Activated CD8-positive, alpha-beta T cell treated with anti-CD3 and anti-CD28 coated beads, Interleukin-2, amount 10 ng/mL, durations not matched to agents 7 days and 5 days (primary cell): ENCODE measurements at regions of chr10 and their contacts with region 1.

Region 1: DNA sequence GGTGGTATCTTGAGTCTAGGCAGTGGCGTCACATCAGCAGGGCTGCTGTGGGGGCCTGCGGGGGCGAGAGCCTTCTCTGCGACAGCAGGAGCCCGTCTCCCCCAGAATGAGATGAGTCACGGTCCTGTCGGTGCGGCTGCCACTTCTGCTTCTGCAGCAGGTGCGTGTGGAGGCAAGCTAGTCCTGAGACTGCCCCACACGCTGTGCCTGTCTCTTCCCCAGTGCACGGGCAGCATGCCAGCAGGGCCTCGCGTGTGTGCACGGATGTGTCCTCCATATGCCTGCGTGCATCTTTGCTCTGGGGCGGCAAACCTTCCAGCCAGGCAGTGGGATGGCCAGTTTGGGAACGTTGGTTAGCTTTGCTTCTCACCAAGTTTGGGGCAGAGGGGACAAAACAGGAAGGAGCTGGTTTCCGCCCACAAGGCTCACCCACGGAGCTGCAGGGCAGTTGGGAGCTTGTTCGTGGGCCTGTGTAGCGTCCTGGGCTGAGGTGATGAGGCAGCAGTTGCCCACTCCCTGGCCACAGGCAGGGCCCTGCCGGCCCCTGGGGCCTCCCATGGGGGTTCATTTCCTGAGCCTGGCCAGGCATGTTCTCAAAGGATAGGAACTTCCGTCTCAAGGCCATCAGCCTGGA is 60.8 kb upstream of the PPIF start:
- DNase-seq: peak; percentile 88
- ATAC-seq: peak; percentile 93
- H3K4me3 Mint-ChIP-seq: peak overlapping the region; percentile 71
- H3K27ac Mint-ChIP-seq: peak overlapping the region; percentile 96
- H3K4me1 Mint-ChIP-seq: peaks cover 68% of the 10 kb centered on the region
- H3K27me3 Mint-ChIP-seq: no peaks in the 10 kb centered on the region

Region 2: GRCh38 chr10:79242620-79243152 is 43.7 kb before region 1 on chr10:
- CTCF ChIA-PET with region 1: interaction called, 4 read pairs
- POLR2A ChIA-PET with region 1: interaction called, 13 read pairs
- DNase-seq: peak; percentile 80
- ATAC-seq: peak; percentile 48
- H3K4me3 Mint-ChIP-seq: peak overlapping the region; percentile 80
- H3K27ac Mint-ChIP-seq: peak overlapping the region; percentile 75
- H3K4me1 Mint-ChIP-seq: peaks cover 60% of the 10 kb centered on the region
- H3K27me3 Mint-ChIP-seq: no peaks in the 10 kb centered on the region

Region 3: GRCh38 chr10:79249186-79250121 is 37.0 kb before region 1 on chr10:
- CTCF ChIA-PET with region 1: interaction called, 4 read pairs
- POLR2A ChIA-PET with region 1: interaction called, 13 read pairs
- DNase-seq: peak; percentile 51
- ATAC-seq: peak; percentile 57
- H3K4me3 Mint-ChIP-seq: peak overlapping the region; percentile 16
- H3K27ac Mint-ChIP-seq: peak overlapping the region; percentile 86
- H3K4me1 Mint-ChIP-seq: peaks cover 72% of the 10 kb centered on the region
- H3K27me3 Mint-ChIP-seq: no peaks in the 10 kb centered on the region

Region 4: GRCh38 chr10:79305988-79306387 is 19.6 kb after region 1 on chr10:
- CTCF ChIA-PET with region 1: no interaction called
- POLR2A ChIA-PET with region 1: no interaction called
- DNase-seq: no peak
- ATAC-seq: no peak
- H3K4me3 Mint-ChIP-seq: no peak overlapping the region
- H3K27ac Mint-ChIP-seq: no peak overlapping the region
- H3K4me1 Mint-ChIP-seq: peaks cover 12% of the 10 kb centered on the region
- H3K27me3 Mint-ChIP-seq: no peaks in the 10 kb centered on the region

Region 5: DNA sequence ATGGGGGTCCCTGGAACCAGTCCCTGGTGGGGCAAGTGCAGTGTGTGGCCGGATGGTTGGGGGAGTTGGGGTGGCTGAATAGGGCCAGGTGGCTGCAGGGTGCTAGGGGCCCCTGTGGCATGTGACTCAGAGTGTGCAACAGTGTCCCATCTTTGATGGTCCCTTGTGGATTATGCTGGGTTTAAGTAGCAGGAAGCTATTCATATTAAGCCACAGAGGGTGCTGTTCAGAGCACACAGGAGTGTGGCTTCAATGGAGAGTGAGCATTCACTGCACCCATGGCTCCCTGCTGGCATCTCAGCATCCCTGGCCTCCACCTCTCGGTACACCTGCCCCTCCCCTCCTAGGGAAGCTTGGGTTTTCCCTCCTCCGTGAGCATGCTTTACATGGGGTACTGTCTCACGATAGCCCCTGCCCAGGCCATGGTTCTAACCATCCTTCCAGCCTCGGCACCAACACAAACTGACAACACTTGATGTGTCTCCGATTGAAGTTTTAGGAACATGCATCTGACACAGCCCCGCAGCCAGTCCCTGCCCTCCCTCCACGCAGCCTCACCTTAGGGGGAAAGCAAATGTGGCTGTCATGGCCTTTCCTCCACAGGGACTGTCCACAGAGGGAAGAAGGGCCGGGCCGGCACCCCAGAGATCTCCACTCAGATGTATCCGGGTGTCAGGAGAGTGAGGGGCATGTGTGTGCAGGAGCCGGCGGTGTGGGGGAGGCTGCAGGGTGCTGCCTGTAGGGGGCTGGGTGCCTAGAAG is 30.4 kb after region 1 on chr10:
- CTCF ChIA-PET with region 1: interaction called, 16 read pairs
- POLR2A ChIA-PET with region 1: interaction called, 10 read pairs
- DNase-seq: peak; percentile 51
- ATAC-seq: peak; percentile 50
- H3K4me3 Mint-ChIP-seq: peak overlapping the region; percentile 71
- H3K27ac Mint-ChIP-seq: peak overlapping the region; percentile 95
- H3K4me1 Mint-ChIP-seq: peaks cover 65% of the 10 kb centered on the region
- H3K27me3 Mint-ChIP-seq: no peaks in the 10 kb centered on the region